ENCODE measurements at regions of chr14 and their contacts with region 1.

Region 1: DNA sequence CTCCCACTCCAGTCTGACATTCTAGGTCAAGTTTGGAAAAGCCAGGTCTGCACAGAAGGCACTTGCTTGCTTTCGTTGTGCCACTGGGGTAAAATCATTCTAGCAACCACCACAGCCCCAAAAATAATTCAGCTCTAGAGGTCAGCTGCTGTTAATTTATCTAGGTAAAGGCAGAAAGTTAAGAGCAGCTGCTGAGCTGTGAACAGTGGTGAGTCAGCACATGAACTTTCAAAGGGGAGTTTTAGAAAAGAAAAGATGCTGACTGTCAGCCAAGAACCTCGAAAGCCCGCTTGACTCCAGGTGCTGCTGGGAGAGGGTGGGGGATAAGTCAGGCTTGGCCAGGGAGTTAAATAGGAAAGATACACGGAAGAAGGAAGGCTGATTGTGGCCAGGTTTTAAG is 12.7 kb downstream of the CCDC197 start:
- DNase-seq: no peak
- ATAC-seq: peak; percentile 21 to 24; a peak in 2 of 6 replicates
- H3K4me3 ChIP-seq: no peak overlapping the region
- H3K27ac ChIP-seq: 0 out of 6 replicates have a peak overlapping the region, but pooled peaks of 1 of the 2 experiments have one; percentile 15
- H3K4me1 ChIP-seq: peaks cover 17% of the 10 kb centered on the region; the same call in 2 of the 3 replicates
- CTCF ChIP-seq: no peak
- EP300 ChIP-seq: no peak
- POLR2A ChIP-seq: no peak
- RAD21 ChIP-seq: no peak

Region 2: DNA sequence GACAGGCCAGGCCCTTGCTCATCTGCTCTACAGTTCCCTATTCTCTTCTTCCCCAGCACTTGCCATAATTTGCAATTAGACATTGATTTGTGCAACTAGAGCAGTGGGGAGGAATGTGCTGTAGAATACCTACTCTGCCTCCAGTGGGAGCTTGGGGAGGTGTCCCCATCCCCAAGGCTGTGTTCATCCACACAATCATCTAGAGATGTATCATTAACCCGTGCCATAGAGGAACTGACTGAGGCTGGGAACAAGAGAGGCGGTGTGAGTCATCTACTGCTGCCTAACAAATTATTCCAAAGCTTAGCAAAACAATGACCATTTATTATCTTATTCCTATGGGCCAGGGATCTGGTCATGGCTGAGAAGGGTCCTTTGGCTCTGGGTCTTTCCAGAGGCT is 11.2 kb after region 1 on chr14:
- CTCF ChIA-PET with region 1: interaction called, 47 read pairs
- POLR2A ChIA-PET with region 1: no interaction called
- DNase-seq: peak in 1 of 2 experiments; percentile 22
- ATAC-seq: peak; percentile 21 to 37; a peak in 2 of 6 replicates
- H3K4me3 ChIP-seq: no peak overlapping the region
- H3K27ac ChIP-seq: no peak overlapping the region
- H3K4me1 ChIP-seq: no peaks in the 10 kb centered on the region
- CTCF ChIP-seq: no peak
- EP300 ChIP-seq: no peak
- POLR2A ChIP-seq: no peak
- RAD21 ChIP-seq: no peak